ENCODE measurements at regions of chr13 and their contacts with region 1.

Region 1: DNA sequence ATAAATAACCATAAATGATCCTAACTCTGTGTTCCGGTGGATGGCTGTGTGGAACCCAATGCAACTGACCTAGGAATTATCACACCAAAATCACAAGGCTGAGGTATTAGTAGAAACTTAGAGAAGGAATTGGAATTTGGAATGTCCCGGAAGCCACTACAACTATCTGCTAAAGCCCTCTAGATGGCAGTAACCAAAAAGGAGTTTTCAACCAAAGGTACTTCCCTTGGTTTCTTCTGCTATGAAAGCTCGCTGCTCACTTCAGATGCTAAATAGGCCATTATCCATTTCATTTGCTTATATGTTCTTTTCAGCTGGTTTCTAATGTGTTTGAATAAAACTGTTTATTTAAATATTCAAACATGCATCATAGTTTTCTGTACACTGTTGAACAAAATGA is 1589.1 kb upstream of the SPRY2 start:
- DNase-seq: peak; percentile 42
- ATAC-seq: peak; percentile 77
- H3K4me3 ChIP-seq: no peak overlapping the region
- H3K27ac ChIP-seq: no peak overlapping the region
- H3K4me1 ChIP-seq: no peaks in the 10 kb centered on the region
- H3K27me3 ChIP-seq: no peaks in the 10 kb centered on the region
- CTCF ChIP-seq: peak; percentile 61

Region 2: DNA sequence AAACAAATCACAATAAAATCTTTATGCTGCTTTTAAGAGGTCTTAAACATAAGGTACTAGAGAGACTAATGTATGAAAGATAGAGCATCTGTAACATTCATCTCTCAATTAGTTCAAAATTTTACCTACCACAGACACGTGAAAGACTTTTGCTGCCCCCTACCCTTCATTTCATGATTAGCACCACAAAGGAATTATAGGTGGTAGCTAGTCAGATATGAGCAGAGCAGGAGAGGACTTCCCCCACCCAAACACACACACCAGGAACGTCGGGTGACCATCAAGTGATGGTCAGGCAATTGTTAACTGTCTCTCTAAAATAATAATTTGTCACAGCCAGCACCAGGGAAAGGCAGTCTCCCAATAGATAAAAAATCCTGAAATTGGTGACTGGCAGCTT is 57.4 kb before region 1 on chr13:
- CTCF ChIA-PET with region 1: no interaction called
- POLR2A ChIA-PET with region 1: no interaction called
- intact Hi-C with region 1: no loop called
- DNase-seq: peak; percentile 43
- ATAC-seq: peak; percentile 50
- H3K4me3 ChIP-seq: no peak overlapping the region
- H3K27ac ChIP-seq: no peak overlapping the region
- H3K4me1 ChIP-seq: peaks cover 5% of the 10 kb centered on the region; the same call in 1 of the 2 replicates
- H3K27me3 ChIP-seq: no peaks in the 10 kb centered on the region
- CTCF ChIP-seq: peak; percentile 59

Region 3: DNA sequence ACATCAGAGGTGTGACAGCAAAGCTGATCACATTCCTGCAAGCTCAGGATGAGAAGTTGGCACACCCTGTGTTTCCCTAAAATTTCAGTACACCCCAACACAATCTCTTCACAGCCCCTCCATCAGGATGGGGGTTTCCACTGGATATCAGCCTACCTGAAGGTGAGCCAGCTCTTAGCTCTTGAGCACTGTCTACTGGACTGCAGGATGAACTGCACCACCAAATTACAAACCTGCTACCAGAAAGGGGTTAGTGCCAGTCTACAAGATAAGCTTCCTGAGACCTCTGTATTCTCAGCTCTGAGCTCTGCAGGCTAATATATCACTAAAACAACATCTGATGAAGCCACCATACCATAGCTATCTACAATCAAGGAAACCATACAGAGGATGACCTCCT is 27.1 kb after region 1 on chr13:
- CTCF ChIA-PET with region 1: no interaction called
- POLR2A ChIA-PET with region 1: no interaction called
- intact Hi-C with region 1: no loop called
- DNase-seq: no peak
- ATAC-seq: no peak
- H3K4me3 ChIP-seq: no peak overlapping the region
- H3K27ac ChIP-seq: no peak overlapping the region
- H3K4me1 ChIP-seq: no peaks in the 10 kb centered on the region
- H3K27me3 ChIP-seq: no peaks in the 10 kb centered on the region
- CTCF ChIP-seq: peak; percentile 27; the same call in 1 of the 2 replicates

Region 4: GRCh38 chr13:82076421-82076950 is 146.5 kb after region 1 on chr13:
- CTCF ChIA-PET with region 1: no interaction called
- POLR2A ChIA-PET with region 1: no interaction called
- intact Hi-C with region 1: loop called (anchors 1 kb)
- DNase-seq: no peak
- ATAC-seq: no peak
- H3K4me3 ChIP-seq: no peak overlapping the region
- H3K27ac ChIP-seq: no peak overlapping the region
- H3K4me1 ChIP-seq: no peaks in the 10 kb centered on the region
- H3K27me3 ChIP-seq: no peaks in the 10 kb centered on the region
- CTCF ChIP-seq: no peak

Region 5: GRCh38 chr13:82330499-82330898 is 400.5 kb after region 1 on chr13:
- CTCF ChIA-PET with region 1: no interaction called
- POLR2A ChIA-PET with region 1: no interaction called
- intact Hi-C with region 1: loop called (anchors 1 kb)
- DNase-seq: peak; percentile 59
- ATAC-seq: no peak; the same call in 1 of the 2 replicates
- H3K4me3 ChIP-seq: no peak overlapping the region
- H3K27ac ChIP-seq: no peak overlapping the region
- H3K4me1 ChIP-seq: no peaks in the 10 kb centered on the region
- H3K27me3 ChIP-seq: no peaks in the 10 kb centered on the region
- CTCF ChIP-seq: peak; percentile 65

Measured in PC-3 (cell line).